Activated CD4-positive, alpha-beta T cell treated with anti-CD3 and anti-CD28 coated beads for 36 hours (primary cell): ENCODE measurements at regions of chr17 and their contacts with region 1.

Region 1: DNA sequence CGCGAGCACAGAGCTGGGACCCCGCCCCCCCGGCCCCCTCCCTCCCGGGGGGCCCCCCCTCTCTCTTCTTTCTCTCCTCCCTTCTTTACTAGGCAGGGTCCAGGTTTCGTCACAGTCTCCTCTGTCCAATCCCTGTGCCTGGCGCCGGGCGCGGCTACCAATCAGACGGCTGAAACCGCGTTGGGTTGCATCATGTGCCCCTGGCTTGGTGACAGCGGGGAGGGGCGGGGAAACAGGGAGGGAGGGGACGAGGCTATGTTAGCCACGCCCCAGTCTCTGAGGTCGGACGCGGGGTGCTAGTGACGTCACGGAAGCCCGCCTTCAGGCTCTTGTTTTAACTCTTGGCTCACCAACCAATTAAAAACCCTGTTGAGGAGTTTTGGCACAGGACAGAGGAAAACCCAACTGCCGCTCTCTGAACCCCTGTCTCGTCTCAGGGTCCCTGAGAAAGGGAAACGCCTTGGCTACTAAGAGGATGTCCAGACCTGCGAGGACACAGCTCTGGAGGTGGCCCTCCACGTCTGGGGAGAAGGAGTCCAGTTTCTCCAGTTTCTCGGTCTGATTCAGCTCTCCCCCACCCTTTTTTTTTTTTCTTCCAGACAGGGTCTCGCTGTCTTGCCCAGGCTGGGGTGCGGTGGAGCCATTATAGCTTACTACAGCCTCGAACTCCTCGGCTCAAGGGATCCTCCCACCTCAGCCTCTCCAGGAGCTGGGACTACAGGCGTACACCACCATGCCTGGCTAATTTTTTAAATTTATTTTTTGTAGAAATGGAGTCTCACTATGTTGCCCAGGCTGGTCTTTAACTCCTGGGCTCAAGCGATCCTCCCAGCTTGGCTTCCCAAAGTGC is 439 bp upstream of the PLEKHH3 start:
- DNase-seq: peak; percentile 100
- ATAC-seq: peak; percentile 84
- H3K4me3 Mint-ChIP-seq: peak overlapping the region; percentile 70
- H3K27ac Mint-ChIP-seq: peak overlapping the region; percentile 69
- H3K4me1 Mint-ChIP-seq: peaks cover 49% of the 10 kb centered on the region
- H3K27me3 Mint-ChIP-seq: peaks cover 29% of the 10 kb centered on the region

Region 2: GRCh38 chr17:42266918-42267778 is 410.1 kb before region 1 on chr17:
- CTCF ChIA-PET with region 1: no interaction called
- POLR2A ChIA-PET with region 1: no interaction called
- intact Hi-C with region 1: loop called in 1 of 2 experiments (anchors 5 kb)
- DNase-seq: peak; percentile 70
- ATAC-seq: peak; percentile 77
- H3K4me3 Mint-ChIP-seq: peak overlapping the region; percentile 47
- H3K27ac Mint-ChIP-seq: peak overlapping the region; percentile 98
- H3K4me1 Mint-ChIP-seq: peaks cover 61% of the 10 kb centered on the region
- H3K27me3 Mint-ChIP-seq: no peaks in the 10 kb centered on the region

Region 3: GRCh38 chr17:42287926-42288802 is 389.1 kb before region 1 on chr17 and contains the start of gene STAT5A:
- CTCF ChIA-PET with region 1: no interaction called
- POLR2A ChIA-PET with region 1: no interaction called
- intact Hi-C with region 1: no loop called
- DNase-seq: peak; percentile 90
- ATAC-seq: peak; percentile 65
- H3K4me3 Mint-ChIP-seq: peak within 1 kb of the TSS; percentile 81
- H3K27ac Mint-ChIP-seq: peak within 1 kb of the TSS; percentile 96
- H3K4me1 Mint-ChIP-seq: peaks cover 63% of the 10 kb centered on the region
- H3K27me3 Mint-ChIP-seq: no peaks in the 10 kb centered on the region
- total RNA-seq, gene STAT5A: 178 to 203 TPM

Region 4: DNA sequence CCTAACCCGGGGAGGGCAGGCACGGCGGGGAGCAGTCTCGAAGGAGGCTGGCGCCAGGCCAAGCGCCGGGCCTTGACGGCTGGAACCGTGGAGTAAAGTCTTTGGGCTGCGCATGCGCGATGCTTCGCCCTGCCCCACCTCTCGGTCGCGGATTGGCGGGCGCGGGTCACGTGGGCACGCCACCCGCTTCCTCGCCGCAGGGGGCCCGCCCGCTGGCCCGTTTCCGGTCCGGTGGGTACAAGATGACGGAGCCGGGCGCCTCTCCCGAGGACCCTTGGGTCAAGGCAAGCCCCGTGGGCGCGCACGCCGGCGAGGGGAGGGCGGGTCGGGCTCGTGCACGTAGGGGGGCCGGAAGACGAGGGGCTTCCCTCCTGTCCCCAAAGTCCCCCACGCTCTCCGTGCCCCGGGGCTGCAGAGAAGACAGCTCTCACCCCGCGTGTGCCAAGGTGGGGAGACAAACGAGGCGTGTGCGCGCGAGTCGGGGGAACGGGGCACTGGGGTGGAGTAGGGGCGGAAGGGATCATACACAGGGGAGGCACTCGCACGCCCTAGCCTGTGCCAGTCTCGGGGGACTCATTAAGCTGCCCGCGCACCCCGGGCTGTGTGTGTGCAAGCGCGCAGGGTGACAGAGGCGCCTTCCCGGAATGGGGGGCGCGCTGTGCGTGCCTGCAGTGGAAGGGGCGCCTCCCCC is 110.2 kb before region 1 on chr17 and contains the start of gene MLX:
- CTCF ChIA-PET with region 1: no interaction called
- POLR2A ChIA-PET with region 1: no interaction called
- intact Hi-C with region 1: loop called in 1 of 2 experiments (anchors 1 kb)
- DNase-seq: peak; percentile 95
- ATAC-seq: peak; percentile 74
- H3K4me3 Mint-ChIP-seq: peak within 1 kb of the TSS; percentile 96
- H3K27ac Mint-ChIP-seq: peak within 1 kb of the TSS; percentile 96
- H3K4me1 Mint-ChIP-seq: peaks cover 35% of the 10 kb centered on the region
- H3K27me3 Mint-ChIP-seq: no peaks in the 10 kb centered on the region
- total RNA-seq, gene MLX: 38.7 to 40.7 TPM

Region 5: GRCh38 chr17:42586514-42587230 is 90.6 kb before region 1 on chr17:
- CTCF ChIA-PET with region 1: no interaction called
- POLR2A ChIA-PET with region 1: no interaction called
- intact Hi-C with region 1: no loop called
- DNase-seq: no peak
- ATAC-seq: no peak
- H3K4me3 Mint-ChIP-seq: no peak overlapping the region
- H3K27ac Mint-ChIP-seq: peak overlapping the region; percentile 34
- H3K4me1 Mint-ChIP-seq: peaks cover 2% of the 10 kb centered on the region
- H3K27me3 Mint-ChIP-seq: no peaks in the 10 kb centered on the region

Region 6: DNA sequence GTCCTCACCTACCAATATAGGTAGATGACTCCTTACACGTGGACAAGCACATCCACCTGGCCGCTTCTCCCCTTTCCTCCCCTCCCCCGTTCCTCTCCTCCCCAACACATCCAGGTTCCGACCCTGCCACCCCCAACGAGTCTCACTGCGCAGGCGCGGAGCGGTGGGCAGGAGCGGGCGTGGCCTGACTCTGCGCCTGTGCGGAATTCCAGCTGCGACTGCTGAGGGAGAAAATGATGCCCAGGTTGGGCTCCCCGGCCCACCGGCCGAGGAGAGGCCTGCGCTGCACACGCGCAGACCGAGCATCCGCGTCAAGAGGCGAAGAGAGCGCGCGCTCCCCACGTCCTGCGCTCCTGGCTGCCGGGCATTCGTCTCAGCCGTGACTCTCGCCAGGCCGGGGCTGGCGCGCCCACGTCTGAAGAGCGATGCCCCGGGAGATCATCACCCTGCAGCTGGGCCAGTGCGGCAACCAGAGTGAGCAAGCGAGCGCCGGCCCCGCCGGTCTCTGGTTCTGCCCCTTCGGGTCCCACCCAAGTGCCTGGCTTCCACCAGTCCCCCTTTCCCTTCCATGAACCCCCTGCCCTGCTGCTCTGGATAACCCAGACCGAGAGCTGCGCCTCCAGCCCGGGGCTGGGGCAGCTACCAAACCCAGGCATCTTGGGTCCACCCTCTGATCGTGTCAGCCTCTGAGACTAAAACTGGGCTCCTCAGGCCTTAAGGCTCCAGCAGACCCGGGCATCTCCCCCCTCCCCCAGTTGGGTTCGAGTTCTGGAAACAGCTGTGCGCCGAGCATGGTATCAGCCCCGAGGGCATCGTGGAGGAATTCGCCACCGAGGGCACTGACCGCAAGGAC is 17.9 kb before region 1 on chr17 and contains the start of gene TUBG2:
- CTCF ChIA-PET with region 1: interaction called, 8 read pairs
- POLR2A ChIA-PET with region 1: no interaction called
- intact Hi-C with region 1: loop called in 1 of 2 experiments (anchors 1 kb)
- DNase-seq: peak; percentile 83
- ATAC-seq: peak; percentile 73
- H3K4me3 Mint-ChIP-seq: peak within 1 kb of the TSS; percentile 86
- H3K27ac Mint-ChIP-seq: peak within 1 kb of the TSS; percentile 67
- H3K4me1 Mint-ChIP-seq: peaks cover 26% of the 10 kb centered on the region
- H3K27me3 Mint-ChIP-seq: no peaks in the 10 kb centered on the region
- total RNA-seq, gene TUBG2: 9.0 to 9.2 TPM

Region 7: GRCh38 chr17:42832974-42833766 is 155.9 kb after region 1 on chr17 and contains the start of gene PSME3:
- CTCF ChIA-PET with region 1: interaction called, 3 read pairs
- POLR2A ChIA-PET with region 1: no interaction called
- intact Hi-C with region 1: loop called in 1 of 2 experiments (anchors 1 kb)
- DNase-seq: peak; percentile 94
- ATAC-seq: peak; percentile 90
- H3K4me3 Mint-ChIP-seq: peak within 1 kb of the TSS; percentile 96
- H3K27ac Mint-ChIP-seq: peak within 1 kb of the TSS; percentile 98
- H3K4me1 Mint-ChIP-seq: peaks cover 18% of the 10 kb centered on the region
- H3K27me3 Mint-ChIP-seq: no peaks in the 10 kb centered on the region
- total RNA-seq, gene PSME3: 116 to 118 TPM

Region 8: GRCh38 chr17:43024407-43025289 is 347.4 kb after region 1 on chr17 and contains the start of gene RND2:
- CTCF ChIA-PET with region 1: interaction called, 3 read pairs
- POLR2A ChIA-PET with region 1: no interaction called
- intact Hi-C with region 1: loop called in 1 of 2 experiments (anchors 5 kb)
- DNase-seq: peak; percentile 89
- ATAC-seq: peak; percentile 68
- H3K4me3 Mint-ChIP-seq: peak within 1 kb of the TSS; percentile 78
- H3K27ac Mint-ChIP-seq: peak within 1 kb of the TSS; percentile 71
- H3K4me1 Mint-ChIP-seq: peaks cover 26% of the 10 kb centered on the region
- H3K27me3 Mint-ChIP-seq: no peaks in the 10 kb centered on the region
- total RNA-seq, gene RND2: 0.05 to 0.16 TPM